ENCODE measurements at regions of chr11 and their contacts with region 1.

Region 1: DNA sequence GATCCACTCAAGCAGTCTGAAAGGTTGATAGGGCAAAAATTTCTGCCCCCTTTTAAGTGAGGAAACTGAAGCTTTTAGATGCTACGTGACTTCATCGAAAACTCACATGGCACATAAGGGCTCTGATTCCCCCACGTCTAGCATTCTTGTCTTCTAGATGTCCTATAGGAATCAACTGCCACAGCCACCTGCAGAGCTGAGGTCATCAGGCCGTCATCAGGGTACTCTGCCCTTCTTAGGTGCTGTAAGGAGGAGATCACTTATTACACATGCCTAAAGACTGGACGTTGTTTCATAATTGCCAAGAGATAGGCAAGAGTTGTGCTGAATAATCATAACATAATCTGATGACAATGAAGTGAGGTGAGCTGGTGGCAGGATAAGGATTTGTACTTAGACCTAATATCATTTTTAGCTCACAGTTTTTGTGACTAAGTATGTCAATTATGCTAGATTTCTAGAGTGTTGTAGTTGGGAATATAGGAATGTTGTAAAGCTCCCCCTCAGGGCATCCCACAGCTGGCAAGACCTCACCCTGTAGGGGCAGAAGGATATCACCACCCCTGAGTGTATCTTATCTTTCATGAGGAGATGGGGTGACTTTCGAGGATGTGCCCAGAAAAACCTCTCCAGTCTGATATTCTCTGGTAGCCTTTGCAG is 349.4 kb downstream of the METTL15 start:
- DNase-seq: no peak
- ATAC-seq: no peak
- H3K4me3 ChIP-seq: no peak overlapping the region
- H3K27ac ChIP-seq: no peak overlapping the region
- H3K4me1 ChIP-seq: peaks cover 5% of the 10 kb centered on the region; the same call in 1 of the 2 replicates
- H3K27me3 ChIP-seq: no peaks in the 10 kb centered on the region
- CTCF ChIP-seq: no peak
- POLR2A ChIP-seq: no peak
- RAD21 ChIP-seq: no peak

Region 2: GRCh38 chr11:28123151-28123581 is 334.4 kb before region 1 on chr11:
- CTCF ChIA-PET with region 1: no interaction called
- POLR2A ChIA-PET with region 1: no interaction called
- dilution Hi-C with region 1: no loop called
- in situ Hi-C with region 1: no loop called
- intact Hi-C with region 1: no loop called
- DNase-seq: peak; percentile 82
- ATAC-seq: peak; percentile 87
- H3K4me3 ChIP-seq: peak overlapping the region; percentile 32; the same call in 1 of the 2 replicates
- H3K27ac ChIP-seq: no peak overlapping the region
- H3K4me1 ChIP-seq: peaks cover 4% of the 10 kb centered on the region
- H3K27me3 ChIP-seq: no peaks in the 10 kb centered on the region
- CTCF ChIP-seq: no peak
- POLR2A ChIP-seq: no peak
- RAD21 ChIP-seq: no peak

Region 3: GRCh38 chr11:28245131-28245530 is 212.5 kb before region 1 on chr11:
- CTCF ChIA-PET with region 1: no interaction called
- POLR2A ChIA-PET with region 1: no interaction called
- dilution Hi-C with region 1: no loop called
- in situ Hi-C with region 1: no loop called
- intact Hi-C with region 1: no loop called
- DNase-seq: peak; percentile 16
- ATAC-seq: no peak
- H3K4me3 ChIP-seq: no peak overlapping the region
- H3K27ac ChIP-seq: no peak overlapping the region
- H3K4me1 ChIP-seq: no peaks in the 10 kb centered on the region; the same call in 1 of the 2 replicates
- H3K27me3 ChIP-seq: no peaks in the 10 kb centered on the region
- CTCF ChIP-seq: no peak
- POLR2A ChIP-seq: no peak
- RAD21 ChIP-seq: no peak

Region 4: DNA sequence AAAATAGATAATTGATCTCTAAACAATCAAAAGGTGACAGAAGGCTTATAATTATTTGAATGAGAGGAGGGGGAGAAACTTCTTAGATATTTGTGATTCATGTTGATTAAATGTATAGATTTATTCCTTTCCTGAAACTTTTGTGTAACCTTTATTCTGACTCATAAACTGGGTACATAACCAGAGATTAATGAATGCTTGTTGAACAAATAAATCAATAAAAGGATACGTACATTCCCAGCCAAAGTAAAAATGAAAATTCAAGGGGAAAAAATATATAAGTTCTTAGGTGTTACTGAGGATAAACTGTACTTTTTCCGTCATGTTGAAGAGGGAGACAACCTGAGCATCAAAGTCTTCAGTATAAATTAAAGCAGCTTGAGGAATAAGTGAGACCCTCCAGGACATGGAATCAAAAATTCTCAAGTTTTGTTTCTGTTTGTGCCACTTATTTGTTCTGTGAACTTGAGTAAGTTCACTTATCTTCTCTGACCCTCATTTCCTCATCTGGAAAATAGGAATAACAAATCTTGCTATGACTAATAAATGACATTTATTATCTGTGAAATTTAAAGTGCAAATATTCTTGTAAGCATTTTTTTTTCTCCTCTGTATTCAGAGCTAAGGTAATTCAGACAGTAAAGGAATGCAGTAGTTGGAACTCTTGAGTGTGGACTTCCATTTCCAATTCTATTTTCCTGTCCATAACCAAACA is 154.0 kb before region 1 on chr11:
- CTCF ChIA-PET with region 1: no interaction called
- POLR2A ChIA-PET with region 1: interaction called, 16 read pairs
- dilution Hi-C with region 1: no loop called
- in situ Hi-C with region 1: no loop called
- intact Hi-C with region 1: no loop called
- DNase-seq: peak; percentile 22
- ATAC-seq: no peak
- H3K4me3 ChIP-seq: no peak overlapping the region
- H3K27ac ChIP-seq: no peak overlapping the region
- H3K4me1 ChIP-seq: no peaks in the 10 kb centered on the region
- H3K27me3 ChIP-seq: no peaks in the 10 kb centered on the region
- CTCF ChIP-seq: no peak
- POLR2A ChIP-seq: no peak
- RAD21 ChIP-seq: no peak

Measured in IMR-90 (cell line).